Heart right ventricle (tissue), 16 donors: ENCODE measurements at regions of chr10 and their contacts with region 1.

Region 1: DNA sequence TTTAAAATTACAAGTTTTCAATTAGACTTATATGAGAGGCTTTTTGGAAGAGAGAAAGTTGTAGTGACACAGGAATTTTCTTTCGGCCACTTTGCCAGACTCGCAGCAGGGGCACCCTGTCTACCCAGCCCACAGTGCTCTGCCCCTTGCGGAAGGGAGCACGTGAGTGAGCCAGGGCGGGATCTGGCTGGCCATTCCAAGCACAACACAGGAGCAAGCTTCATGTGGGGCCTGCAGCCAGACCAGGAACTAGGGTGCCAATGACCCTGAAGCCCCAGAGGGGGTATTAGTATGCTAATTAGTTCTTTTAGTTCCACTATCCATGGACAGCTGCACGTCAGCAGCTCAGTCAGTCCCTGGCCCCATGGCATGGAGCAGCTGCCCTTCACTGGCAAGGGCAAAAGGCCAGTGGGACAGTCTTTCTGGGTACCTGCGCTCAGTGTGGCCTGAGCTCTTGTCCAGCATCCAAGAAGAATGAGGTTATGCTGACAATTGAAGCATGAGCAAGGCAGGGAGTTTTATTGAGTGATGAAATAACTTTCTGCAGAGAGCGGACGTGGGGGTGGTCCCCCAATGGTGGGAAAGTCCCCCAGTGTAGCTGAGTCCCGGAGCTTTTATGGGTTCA is 251.1 kb upstream of the CSTF2T start:
- DNase-seq: peak in 1 of 2 donors; percentile 10
- ATAC-seq: peak in 7 of 8 donors; percentile 19 to 73 (median 47)
- H3K4me3 ChIP-seq: no peak overlapping the region
- H3K27ac ChIP-seq: peak overlapping the region in 5 of 10 donors; percentile 4 to 36 (median 19)
- H3K4me1 ChIP-seq: peaks cover 0 to 32% (median 12%) of the 10 kb centered on the region in 9 donors
- H3K27me3 ChIP-seq: no peaks in the 10 kb centered on the region
- CTCF ChIP-seq: no peak

Region 2: GRCh38 chr10:50988792-50989191 is 961.7 kb before region 1 on chr10:
- intact Hi-C with region 1: loop called in 1 of 10 experiments (anchors 10 kb)
- DNase-seq: no peak
- ATAC-seq: no peak
- H3K4me3 ChIP-seq: peak overlapping the region in 7 of 10 donors; percentile 9 to 79 (median 71)
- H3K27ac ChIP-seq: peak overlapping the region in 7 of 10 donors; percentile 5 to 94 (median 41)
- H3K4me1 ChIP-seq: peaks cover 0 to 20% (median 6%) of the 10 kb centered on the region in 9 donors
- H3K27me3 ChIP-seq: peaks cover 0 to 39% (median 0%) of the 10 kb centered on the region in 7 donors
- CTCF ChIP-seq: peak in 8 of 9 donors; percentile 15 to 63 (median 46)

Region 3: DNA sequence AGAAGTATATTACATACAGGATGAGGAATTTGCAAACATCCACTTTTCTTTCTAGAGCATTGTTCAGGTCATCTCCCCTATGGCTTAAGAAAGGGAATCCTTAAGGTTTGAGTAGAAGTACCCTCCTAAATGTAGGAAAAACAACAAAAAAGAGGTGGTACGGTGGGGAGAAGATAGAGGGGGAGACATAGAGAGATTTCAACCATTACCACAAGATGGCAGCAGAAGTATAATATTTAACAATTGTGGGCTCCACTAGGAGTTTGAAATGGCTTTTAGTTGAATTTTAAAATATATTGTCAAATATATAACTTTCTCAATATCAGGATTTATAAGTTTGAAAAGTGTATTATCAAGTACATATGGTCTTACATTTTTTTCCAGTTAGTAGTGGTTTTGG is 948.9 kb before region 1 on chr10:
- intact Hi-C with region 1: loop called in 2 of 10 experiments (anchors 10 kb)
- DNase-seq: no peak
- ATAC-seq: peak in 5 of 8 donors; percentile 54 to 88 (median 65)
- H3K4me3 ChIP-seq: no peak overlapping the region
- H3K27ac ChIP-seq: peak overlapping the region in 6 of 10 donors; percentile 3 to 59 (median 38)
- H3K4me1 ChIP-seq: peaks cover 0 to 74% (median 12%) of the 10 kb centered on the region in 9 donors
- H3K27me3 ChIP-seq: peaks cover 0 to 3% (median 0%) of the 10 kb centered on the region in 7 donors
- CTCF ChIP-seq: peak; percentile 31 to 73 (median 65)

Region 4: GRCh38 chr10:51389415-51390321 is 560.8 kb before region 1 on chr10:
- intact Hi-C with region 1: loop called in 1 of 10 experiments (anchors 10 kb)
- DNase-seq: peak; percentile 16 to 18
- ATAC-seq: peak; percentile 38 to 78 (median 72)
- H3K4me3 ChIP-seq: no peak overlapping the region
- H3K27ac ChIP-seq: peak overlapping the region in 3 of 10 donors; percentile 2 to 33 (median 10)
- H3K4me1 ChIP-seq: peaks cover 0 to 26% (median 14%) of the 10 kb centered on the region in 9 donors
- H3K27me3 ChIP-seq: no peaks in the 10 kb centered on the region
- CTCF ChIP-seq: peak; percentile 46 to 86 (median 78)

Region 5: GRCh38 chr10:51699475-51700227 is 250.8 kb before region 1 on chr10 and contains the start of gene CSTF2T:
- intact Hi-C with region 1: loop called in 2 of 10 experiments (anchors 10 kb)
- DNase-seq: peak; percentile 79 to 94
- ATAC-seq: peak; percentile 96 to 99 (median 97)
- H3K4me3 ChIP-seq: peak within 1 kb of the TSS; percentile 62 to 84 (median 72)
- H3K27ac ChIP-seq: peak within 1 kb of the TSS; percentile 88 to 99 (median 94)
- H3K4me1 ChIP-seq: peaks cover 2 to 53% (median 43%) of the 10 kb centered on the region in 9 donors
- H3K27me3 ChIP-seq: no peaks in the 10 kb centered on the region
- CTCF ChIP-seq: no peak
- total RNA-seq, gene CSTF2T: 20.6 to 31.6 (median 23.1) TPM

Region 6: GRCh38 chr10:51718804-51719291 is 231.6 kb before region 1 on chr10:
- intact Hi-C with region 1: loop called in 1 of 10 experiments (anchors 10 kb)
- DNase-seq: no peak
- ATAC-seq: peak in 1 of 8 donors; percentile 41
- H3K4me3 ChIP-seq: no peak overlapping the region
- H3K27ac ChIP-seq: no peak overlapping the region
- H3K4me1 ChIP-seq: peaks cover 0 to 4% (median 0%) of the 10 kb centered on the region in 9 donors
- H3K27me3 ChIP-seq: no peaks in the 10 kb centered on the region
- CTCF ChIP-seq: no peak

Region 7: DNA sequence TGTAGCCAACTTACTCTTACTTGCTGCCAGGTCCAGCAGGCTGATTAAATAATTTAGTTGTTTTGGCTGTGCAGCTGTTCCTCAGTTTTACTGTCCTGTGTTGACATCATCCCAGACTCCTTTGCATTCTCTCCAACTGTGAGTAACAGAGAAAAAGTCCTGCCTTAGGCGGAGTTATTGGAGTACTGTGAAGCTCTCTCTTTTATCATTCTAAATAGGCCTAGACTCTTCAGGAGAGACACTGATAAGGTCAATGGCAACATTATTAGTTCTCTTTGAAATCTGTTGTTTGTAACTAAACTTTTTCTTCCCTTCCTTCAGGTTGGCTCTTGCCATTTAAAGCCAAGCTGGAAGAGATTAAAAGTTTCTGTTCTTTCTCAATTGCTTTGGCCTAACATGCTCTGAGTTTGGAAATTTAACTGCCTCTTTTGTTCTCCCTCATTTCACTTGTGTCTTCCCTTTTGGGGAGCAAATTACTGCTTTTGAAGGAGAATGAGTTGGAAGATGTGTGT is 35.4 kb before region 1 on chr10:
- intact Hi-C with region 1: no loop called
- DNase-seq: no peak
- ATAC-seq: peak in 5 of 8 donors; percentile 40 to 79 (median 47)
- H3K4me3 ChIP-seq: no peak overlapping the region
- H3K27ac ChIP-seq: peak overlapping the region in 2 of 10 donors; percentile 15 to 49
- H3K4me1 ChIP-seq: peaks cover 0 to 17% (median 2%) of the 10 kb centered on the region in 9 donors
- H3K27me3 ChIP-seq: no peaks in the 10 kb centered on the region
- CTCF ChIP-seq: no peak

Region 8: DNA sequence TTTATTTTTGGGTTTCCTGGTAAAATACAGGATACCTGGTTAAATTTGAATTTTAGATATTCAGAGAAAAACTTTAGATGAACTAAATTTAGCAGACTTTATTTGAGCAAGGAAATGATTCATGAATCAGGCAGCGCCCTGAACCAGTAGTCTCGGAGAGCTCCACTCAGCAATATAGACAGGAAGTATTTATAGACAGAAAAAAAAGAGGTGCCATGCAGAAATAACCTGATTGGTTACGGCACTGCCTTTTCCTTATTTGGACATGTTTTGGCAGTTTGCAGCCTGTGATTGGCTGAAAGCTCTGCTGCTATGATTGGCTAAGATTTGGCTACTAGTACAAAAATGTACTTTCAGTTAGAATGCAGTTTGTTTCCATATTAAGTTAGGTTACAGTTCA is 165.3 kb after region 1 on chr10:
- intact Hi-C with region 1: no loop called
- DNase-seq: no peak
- ATAC-seq: no peak
- H3K4me3 ChIP-seq: no peak overlapping the region
- H3K27ac ChIP-seq: no peak overlapping the region
- H3K4me1 ChIP-seq: peaks cover 0 to 5% (median 0%) of the 10 kb centered on the region in 9 donors
- H3K27me3 ChIP-seq: no peaks in the 10 kb centered on the region
- CTCF ChIP-seq: no peak